Heart right ventricle (tissue), 16 donors: ENCODE measurements at regions of chr1 and their contacts with region 1.

Region 1: GRCh38 chr1:227416156-227416830 is 98.0 kb upstream of the CDC42BPA start:
- DNase-seq: no peak
- ATAC-seq: no peak
- H3K4me3 ChIP-seq: no peak overlapping the region
- H3K27ac ChIP-seq: peak overlapping the region in 1 of 10 donors; percentile 12
- H3K4me1 ChIP-seq: peaks cover 0 to 28% (median 7%) of the 10 kb centered on the region in 9 donors
- H3K27me3 ChIP-seq: no peaks in the 10 kb centered on the region
- CTCF ChIP-seq: no peak

Region 2: DNA sequence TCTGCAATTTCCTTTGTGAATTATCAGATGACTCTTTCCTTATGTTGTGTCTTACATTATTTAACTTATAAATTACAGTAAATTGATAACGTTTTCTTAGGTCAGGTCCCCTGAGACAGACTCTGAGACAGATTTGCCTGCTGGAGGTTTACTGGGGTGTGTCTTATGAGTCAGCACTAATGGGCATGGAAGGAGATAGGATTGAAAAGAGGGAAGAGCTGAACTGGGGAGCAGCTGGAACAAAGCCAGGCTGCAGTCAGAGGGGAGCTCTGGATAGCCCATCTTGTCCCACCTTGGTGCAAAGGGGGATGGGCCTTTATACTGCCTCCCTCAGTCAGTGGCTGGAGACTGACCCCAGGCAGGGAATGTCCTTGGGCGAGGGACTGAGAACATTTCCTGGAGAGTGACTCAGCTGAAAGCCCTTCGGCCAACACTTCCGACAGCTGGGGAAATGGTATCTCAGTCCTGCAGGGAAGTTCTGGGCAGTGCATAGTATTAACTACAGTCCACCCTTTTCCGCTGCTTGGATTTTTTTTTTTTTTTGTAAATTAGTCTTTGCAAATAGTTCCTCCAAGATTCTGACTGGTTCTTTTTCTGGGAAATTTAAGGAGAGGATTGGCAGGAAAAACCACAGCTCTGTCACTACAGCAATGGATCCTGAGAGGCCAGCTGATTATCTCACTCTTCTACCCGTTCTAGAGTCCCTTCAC is 59.0 kb before region 1 on chr1:
- intact Hi-C with region 1: loop called in 2 of 10 experiments (anchors 5 to 10 kb)
- DNase-seq: peak; percentile 47 to 84
- ATAC-seq: peak; percentile 94 to 99 (median 98)
- H3K4me3 ChIP-seq: no peak overlapping the region
- H3K27ac ChIP-seq: peak overlapping the region; percentile 31 to 91 (median 74)
- H3K4me1 ChIP-seq: peaks cover 4 to 34% (median 23%) of the 10 kb centered on the region in 9 donors
- H3K27me3 ChIP-seq: no peaks in the 10 kb centered on the region
- CTCF ChIP-seq: peak in 1 of 9 donors; percentile 22

Region 3: DNA sequence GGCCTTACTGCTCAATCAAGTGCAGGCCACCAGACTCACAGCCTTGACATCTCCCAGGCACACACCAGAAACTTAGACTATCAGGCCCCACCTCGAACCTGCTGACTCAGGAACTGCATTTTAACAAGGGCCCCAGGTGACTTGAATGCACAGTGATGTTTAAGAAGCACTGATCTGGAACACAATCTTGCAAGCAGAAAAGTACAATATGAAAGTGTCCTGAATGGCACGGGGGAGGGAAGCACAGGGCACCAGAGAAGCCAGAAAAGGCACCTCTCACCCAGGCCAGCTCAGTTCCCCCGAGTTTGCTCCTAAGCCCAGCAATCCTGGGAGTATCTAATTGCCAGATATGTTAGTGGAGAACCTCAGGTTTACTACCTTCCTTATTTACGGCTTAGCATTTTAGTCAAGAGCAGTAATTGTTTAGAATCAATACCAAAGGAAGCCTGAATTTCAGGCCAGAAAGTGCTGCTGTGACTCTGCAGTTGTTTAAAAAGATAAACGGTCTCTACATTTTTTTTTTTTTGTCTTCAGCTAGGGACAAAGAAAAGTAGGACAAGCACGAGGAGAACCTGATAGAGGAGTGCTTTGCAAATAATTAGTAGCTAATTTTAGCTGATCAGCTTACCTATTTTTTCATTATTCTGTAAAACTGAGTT is 47.1 kb before region 1 on chr1:
- intact Hi-C with region 1: loop called in 2 of 10 experiments (anchors 5 to 10 kb)
- DNase-seq: no peak
- ATAC-seq: no peak
- H3K4me3 ChIP-seq: no peak overlapping the region
- H3K27ac ChIP-seq: no peak overlapping the region
- H3K4me1 ChIP-seq: peaks cover 0 to 4% (median 0%) of the 10 kb centered on the region in 9 donors
- H3K27me3 ChIP-seq: no peaks in the 10 kb centered on the region
- CTCF ChIP-seq: no peak

Region 4: GRCh38 chr1:227447531-227447990 is 31.3 kb after region 1 on chr1:
- intact Hi-C with region 1: no loop called
- DNase-seq: peak; percentile 73 to 75
- ATAC-seq: peak; percentile 69 to 94 (median 78)
- H3K4me3 ChIP-seq: peak overlapping the region in 6 of 10 donors; percentile 12 to 44 (median 31)
- H3K27ac ChIP-seq: peak overlapping the region in 9 of 10 donors; percentile 36 to 84 (median 74)
- H3K4me1 ChIP-seq: peaks cover 0 to 18% (median 9%) of the 10 kb centered on the region in 9 donors
- H3K27me3 ChIP-seq: peaks cover 0 to 5% (median 0%) of the 10 kb centered on the region in 7 donors
- CTCF ChIP-seq: peak; percentile 34 to 83 (median 57)

Region 5: GRCh38 chr1:227576189-227576588 is 159.9 kb after region 1 on chr1:
- intact Hi-C with region 1: no loop called
- DNase-seq: no peak
- ATAC-seq: peak in 3 of 8 donors; percentile 20 to 37 (median 35)
- H3K4me3 ChIP-seq: no peak overlapping the region
- H3K27ac ChIP-seq: no peak overlapping the region
- H3K4me1 ChIP-seq: peaks cover 0 to 16% (median 4%) of the 10 kb centered on the region in 9 donors
- H3K27me3 ChIP-seq: no peaks in the 10 kb centered on the region
- CTCF ChIP-seq: no peak

Region 6: GRCh38 chr1:227612658-227613057 is 196.4 kb after region 1 on chr1:
- intact Hi-C with region 1: no loop called
- DNase-seq: no peak
- ATAC-seq: no peak
- H3K4me3 ChIP-seq: no peak overlapping the region
- H3K27ac ChIP-seq: no peak overlapping the region
- H3K4me1 ChIP-seq: no peaks in the 10 kb centered on the region
- H3K27me3 ChIP-seq: no peaks in the 10 kb centered on the region
- CTCF ChIP-seq: no peak